H1 (cell line): ENCODE measurements at regions of chr3 and their contacts with region 1.

Region 1: DNA sequence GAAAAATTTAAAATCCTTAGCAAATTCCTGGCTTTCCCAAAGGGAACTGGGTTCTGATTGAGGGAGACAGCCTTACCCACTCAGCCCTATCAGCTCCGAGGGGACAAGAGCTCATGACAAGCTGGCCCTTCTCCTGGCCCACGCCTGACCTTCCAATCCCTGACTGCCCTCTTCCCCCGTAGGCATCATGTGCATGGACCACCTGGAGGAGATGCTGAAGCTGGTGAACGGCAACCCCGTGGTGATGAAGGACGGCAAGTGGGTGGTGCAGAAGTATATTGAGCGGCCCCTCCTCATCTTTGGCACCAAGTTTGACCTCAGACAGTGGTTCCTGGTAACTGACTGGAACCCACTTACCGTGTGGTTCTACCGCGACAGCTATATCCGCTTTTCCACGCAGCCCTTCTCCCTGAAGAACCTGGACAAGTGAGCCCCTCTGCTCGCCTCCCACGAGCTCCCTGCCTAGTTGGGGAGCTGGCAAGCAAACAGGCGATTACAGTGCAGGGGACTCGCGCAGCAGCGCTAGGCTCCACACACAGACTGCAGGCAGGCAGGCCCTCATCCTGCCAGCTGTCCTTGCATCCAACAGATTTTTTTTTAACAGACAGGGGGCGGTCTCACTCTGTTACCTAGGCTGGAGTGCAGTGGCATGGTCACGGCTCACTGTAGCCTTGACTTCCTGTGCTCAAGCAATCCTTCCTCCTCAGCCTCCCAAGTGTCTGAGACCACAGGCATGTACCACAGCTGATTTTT is 16.8 kb downstream of the RPUSD3 start:
- DNase-seq: peak in 1 of 2 experiments; percentile 74
- H3K4me3 ChIP-seq: no peak overlapping the region
- H3K27ac ChIP-seq: no peak overlapping the region
- H3K4me1 ChIP-seq: peaks cover 0 to 5% (median 2%) of the 10 kb centered on the region in 4 experiments; a peak in 2 of 7 replicates
- H3K27me3 ChIP-seq: no peaks in the 10 kb centered on the region; a peak in 1 of 7 replicates
- CTCF ChIP-seq: peak; percentile 55 to 72 (median 72)
- EP300 ChIP-seq: no peak
- POLR2A ChIP-seq: no peak
- RAD21 ChIP-seq: peak; percentile 67 to 76

Region 2: GRCh38 chr3:9837701-9838582 is 11.0 kb after region 1 on chr3:
- CTCF ChIA-PET with region 1: interaction called, 74 read pairs
- POLR2A ChIA-PET with region 1: interaction called, 12 read pairs
- DNase-seq: no peak
- H3K4me3 ChIP-seq: no peak overlapping the region
- H3K27ac ChIP-seq: no peak overlapping the region
- H3K4me1 ChIP-seq: 0 out of 7 replicates have a peak, but pooled peaks cover 0 to 4% (median 0%) of the 10 kb centered on the region in 4 experiments
- H3K27me3 ChIP-seq: no peaks in the 10 kb centered on the region
- CTCF ChIP-seq: no peak
- EP300 ChIP-seq: no peak
- POLR2A ChIP-seq: no peak
- RAD21 ChIP-seq: no peak

Region 3: DNA sequence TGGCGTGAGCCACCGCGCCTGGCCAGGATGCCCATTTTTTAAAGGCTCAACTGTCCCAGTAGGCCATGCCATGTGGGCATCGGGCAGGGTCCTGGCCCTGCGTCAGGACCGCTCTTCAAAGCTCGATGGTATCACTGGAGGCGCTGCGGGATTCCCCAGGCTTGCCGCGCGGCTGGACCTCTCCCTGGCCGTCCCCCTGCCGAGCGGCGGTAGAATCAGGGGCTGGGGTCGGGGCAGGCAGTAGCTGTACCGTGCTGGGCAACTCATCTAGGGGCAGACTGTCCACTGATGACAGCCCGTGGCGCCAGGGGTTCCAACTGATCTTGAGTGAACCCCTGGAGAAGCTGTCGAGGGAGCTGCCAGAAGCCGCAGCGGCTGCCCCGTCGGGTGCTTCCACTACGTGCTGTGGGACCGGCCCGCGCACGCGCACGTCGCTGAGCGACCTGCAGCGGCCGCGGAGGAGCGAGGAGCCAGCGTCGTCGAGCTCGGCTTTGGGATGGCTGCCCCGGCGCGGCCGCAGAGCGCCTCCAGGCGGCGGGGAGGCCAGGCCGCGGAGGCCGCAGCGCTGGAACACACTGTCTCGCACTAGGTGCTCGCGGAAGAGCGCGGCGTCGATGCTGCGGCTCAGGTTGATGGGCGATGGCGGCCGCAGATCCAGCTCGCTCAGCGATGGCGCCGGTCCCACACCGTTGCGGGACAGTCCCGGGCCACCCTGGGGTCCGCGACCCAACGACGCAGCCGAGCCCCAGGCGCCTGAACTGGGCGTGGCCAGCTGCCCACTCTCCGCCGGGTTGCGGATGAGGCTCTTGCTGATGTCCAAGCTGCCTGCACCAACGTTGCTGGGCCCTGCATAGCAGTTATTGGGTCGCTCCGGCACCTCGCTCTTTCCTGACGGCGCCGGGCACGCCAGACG is 119.4 kb after region 1 on chr3:
- CTCF ChIA-PET with region 1: interaction called, 18 read pairs
- POLR2A ChIA-PET with region 1: interaction called, 10 read pairs
- DNase-seq: peak; percentile 70 to 89
- H3K4me3 ChIP-seq: peak overlapping the region; percentile 42 to 69 (median 51)
- H3K27ac ChIP-seq: no peak overlapping the region
- H3K4me1 ChIP-seq: peaks cover 0 to 8% (median 4%) of the 10 kb centered on the region in 4 experiments; a peak in 5 of 7 replicates
- H3K27me3 ChIP-seq: no peaks in the 10 kb centered on the region
- CTCF ChIP-seq: peak in 2 of 3 experiments; percentile 89 to 92; a peak in 3 of 4 replicates
- EP300 ChIP-seq: peak in 1 of 2 experiments; percentile 71; a peak in 1 of 3 replicates
- POLR2A ChIP-seq: peak in 1 of 2 experiments; percentile 69; a peak in 2 of 3 replicates
- RAD21 ChIP-seq: peak; percentile 70 to 78